CD4-positive, alpha-beta memory T cell (primary cell): ENCODE measurements at regions of chr5 and their contacts with region 1.

Region 1: DNA sequence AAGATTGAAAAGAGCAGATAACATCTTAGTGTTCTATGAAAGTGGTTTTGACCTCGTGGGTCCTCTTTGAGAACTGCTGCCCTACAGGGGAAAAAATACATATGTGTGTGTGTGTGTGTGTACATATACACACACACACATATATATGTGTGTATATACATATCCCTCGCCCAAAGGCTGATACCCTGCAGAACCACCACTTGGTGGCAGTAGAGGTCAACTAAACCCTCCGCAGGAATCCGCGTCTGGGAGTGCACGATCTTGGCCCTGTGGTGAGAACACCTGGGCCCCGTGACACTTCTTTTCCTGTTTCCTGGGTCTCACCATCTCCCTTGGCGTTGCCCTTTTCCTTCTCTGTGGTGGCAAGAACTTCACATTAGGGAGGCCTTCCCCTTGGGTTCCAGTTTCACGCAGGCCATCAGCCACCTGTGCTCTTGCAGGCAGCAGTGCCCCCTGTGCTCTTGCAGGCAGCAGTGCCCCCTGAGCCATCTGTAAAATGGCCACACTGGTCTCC is 8.2 kb downstream of the IL9 start:
- DNase-seq: peak; percentile 63 to 70 (median 68)
- H3K4me3 ChIP-seq: no peak overlapping the region
- H3K4me3 Mint-ChIP-seq: peak overlapping the region in 7 of 8 donors; percentile 40 to 75 (median 59)
- H3K27ac ChIP-seq: no peak overlapping the region
- H3K27ac Mint-ChIP-seq: peak overlapping the region in 1 of 7 donors; percentile 73
- H3K4me1 ChIP-seq: peaks cover 14% of the 10 kb centered on the region
- H3K4me1 Mint-ChIP-seq: peaks cover 7 to 29% (median 16%) of the 10 kb centered on the region in 4 donors
- H3K27me3 ChIP-seq: no peaks in the 10 kb centered on the region
- H3K27me3 Mint-ChIP-seq: peaks cover 6 to 19% of the 10 kb centered on the region in 2 donors

Region 2: GRCh38 chr5:135332519-135333150 is 554.8 kb before region 1 on chr5:
- CTCF ChIA-PET with region 1: no interaction called
- POLR2A ChIA-PET with region 1: no interaction called
- intact Hi-C with region 1: no loop called
- DNase-seq: peak in 3 of 5 donors; percentile 13 to 20 (median 20)
- H3K4me3 ChIP-seq: no peak overlapping the region
- H3K4me3 Mint-ChIP-seq: no peak overlapping the region
- H3K27ac ChIP-seq: no peak overlapping the region
- H3K27ac Mint-ChIP-seq: no peak overlapping the region
- H3K4me1 ChIP-seq: no peaks in the 10 kb centered on the region
- H3K4me1 Mint-ChIP-seq: peaks cover 0 to 2% (median 0%) of the 10 kb centered on the region in 4 donors
- H3K27me3 ChIP-seq: no peaks in the 10 kb centered on the region
- H3K27me3 Mint-ChIP-seq: no peaks in the 10 kb centered on the region

Region 3: GRCh38 chr5:135800656-135801055 is 86.8 kb before region 1 on chr5:
- CTCF ChIA-PET with region 1: no interaction called
- POLR2A ChIA-PET with region 1: no interaction called
- intact Hi-C with region 1: no loop called
- DNase-seq: no peak
- H3K4me3 ChIP-seq: no peak overlapping the region
- H3K4me3 Mint-ChIP-seq: no peak overlapping the region
- H3K27ac ChIP-seq: no peak overlapping the region
- H3K27ac Mint-ChIP-seq: no peak overlapping the region
- H3K4me1 ChIP-seq: no peaks in the 10 kb centered on the region
- H3K4me1 Mint-ChIP-seq: no peaks in the 10 kb centered on the region
- H3K27me3 ChIP-seq: no peaks in the 10 kb centered on the region
- H3K27me3 Mint-ChIP-seq: peaks cover 2 to 16% of the 10 kb centered on the region in 2 donors

Region 4: DNA sequence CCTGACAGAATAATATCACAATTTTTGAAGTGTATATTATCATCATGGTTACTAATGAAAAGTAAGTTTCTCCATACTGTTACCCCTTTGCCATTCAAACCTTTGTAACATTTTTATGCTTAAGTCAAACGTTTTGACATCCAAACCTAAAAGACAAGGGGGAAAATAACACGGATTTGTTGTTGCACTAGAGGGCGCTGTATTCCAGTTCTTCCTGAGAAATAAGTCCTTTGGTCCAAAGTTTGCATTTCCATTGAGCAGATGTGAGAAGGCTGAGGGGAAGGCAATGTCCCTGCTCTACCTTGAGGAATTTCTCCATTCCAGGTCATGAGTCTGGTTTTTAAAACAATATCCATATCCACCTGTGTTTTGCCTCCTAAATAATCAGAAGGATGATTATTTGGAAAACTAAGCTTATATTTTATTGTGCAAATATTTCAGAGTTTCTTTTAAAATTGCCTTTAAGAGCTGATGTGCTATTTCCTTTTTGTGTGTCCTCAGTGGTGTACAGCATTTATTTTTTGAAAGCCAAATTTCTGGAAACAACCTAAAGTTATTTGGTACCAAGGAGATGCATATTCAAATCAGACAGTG is 57.7 kb after region 1 on chr5:
- CTCF ChIA-PET with region 1: interaction called, 4 read pairs
- POLR2A ChIA-PET with region 1: no interaction called
- intact Hi-C with region 1: loop called (anchors 1 kb)
- DNase-seq: peak in 4 of 5 donors; percentile 33 to 44 (median 40)
- H3K4me3 ChIP-seq: no peak overlapping the region
- H3K4me3 Mint-ChIP-seq: no peak overlapping the region
- H3K27ac ChIP-seq: no peak overlapping the region
- H3K27ac Mint-ChIP-seq: no peak overlapping the region
- H3K4me1 ChIP-seq: no peaks in the 10 kb centered on the region
- H3K4me1 Mint-ChIP-seq: no peaks in the 10 kb centered on the region
- H3K27me3 ChIP-seq: no peaks in the 10 kb centered on the region
- H3K27me3 Mint-ChIP-seq: peaks cover 4 to 8% of the 10 kb centered on the region in 2 donors

Region 5: GRCh38 chr5:136080483-136081216 is 193.2 kb after region 1 on chr5:
- CTCF ChIA-PET with region 1: interaction called, 32 read pairs
- POLR2A ChIA-PET with region 1: no interaction called
- intact Hi-C with region 1: loop called (anchors 1 kb)
- DNase-seq: peak; percentile 51 to 76 (median 61)
- H3K4me3 ChIP-seq: peak overlapping the region; percentile 20 to 43
- H3K4me3 Mint-ChIP-seq: peak overlapping the region; percentile 80 to 92 (median 84)
- H3K27ac ChIP-seq: no peak overlapping the region
- H3K27ac Mint-ChIP-seq: peak overlapping the region in 5 of 7 donors; percentile 43 to 88 (median 83)
- H3K4me1 ChIP-seq: peaks cover 9% of the 10 kb centered on the region
- H3K4me1 Mint-ChIP-seq: peaks cover 7 to 13% (median 10%) of the 10 kb centered on the region in 4 donors
- H3K27me3 ChIP-seq: peaks cover 12% of the 10 kb centered on the region
- H3K27me3 Mint-ChIP-seq: peaks cover 24 to 29% of the 10 kb centered on the region in 2 donors

Region 6: GRCh38 chr5:136108180-136108611 is 220.8 kb after region 1 on chr5:
- CTCF ChIA-PET with region 1: no interaction called
- POLR2A ChIA-PET with region 1: no interaction called
- intact Hi-C with region 1: no loop called
- DNase-seq: no peak
- H3K4me3 ChIP-seq: no peak overlapping the region
- H3K4me3 Mint-ChIP-seq: no peak overlapping the region
- H3K27ac ChIP-seq: no peak overlapping the region
- H3K27ac Mint-ChIP-seq: no peak overlapping the region
- H3K4me1 ChIP-seq: no peaks in the 10 kb centered on the region
- H3K4me1 Mint-ChIP-seq: no peaks in the 10 kb centered on the region
- H3K27me3 ChIP-seq: no peaks in the 10 kb centered on the region
- H3K27me3 Mint-ChIP-seq: peaks cover 1 to 5% of the 10 kb centered on the region in 2 donors

Region 7: GRCh38 chr5:136212252-136212721 is 324.9 kb after region 1 on chr5:
- CTCF ChIA-PET with region 1: interaction called, 18 read pairs
- POLR2A ChIA-PET with region 1: no interaction called
- intact Hi-C with region 1: loop called (anchors 1 kb)
- DNase-seq: peak in 4 of 5 donors; percentile 20 to 52 (median 30)
- H3K4me3 ChIP-seq: no peak overlapping the region
- H3K4me3 Mint-ChIP-seq: no peak overlapping the region
- H3K27ac ChIP-seq: no peak overlapping the region
- H3K27ac Mint-ChIP-seq: no peak overlapping the region
- H3K4me1 ChIP-seq: no peaks in the 10 kb centered on the region
- H3K4me1 Mint-ChIP-seq: no peaks in the 10 kb centered on the region
- H3K27me3 ChIP-seq: no peaks in the 10 kb centered on the region
- H3K27me3 Mint-ChIP-seq: peaks cover 8 to 24% of the 10 kb centered on the region in 2 donors

Region 8: GRCh38 chr5:137498736-137499505 is 1611.5 kb after region 1 on chr5 and contains the start of gene SPOCK1:
- CTCF ChIA-PET with region 1: no interaction called
- POLR2A ChIA-PET with region 1: no interaction called
- intact Hi-C with region 1: loop called (anchors 10 kb)
- DNase-seq: peak in 4 of 5 donors; percentile 17 to 35 (median 33)
- H3K4me3 ChIP-seq: no peak within 1 kb of the TSS
- H3K4me3 Mint-ChIP-seq: no peak within 1 kb of the TSS
- H3K27ac ChIP-seq: no peak within 1 kb of the TSS
- H3K27ac Mint-ChIP-seq: no peak within 1 kb of the TSS
- H3K4me1 ChIP-seq: no peaks in the 10 kb centered on the region
- H3K4me1 Mint-ChIP-seq: no peaks in the 10 kb centered on the region
- H3K27me3 ChIP-seq: no peaks in the 10 kb centered on the region
- H3K27me3 Mint-ChIP-seq: peaks cover 14 to 16% of the 10 kb centered on the region in 2 donors
- total RNA-seq, gene SPOCK1: not detected